Activated CD4-positive, alpha-beta T cell treated with anti-CD3 and anti-CD28 coated beads, Interleukin-2, amount 10 ng/mL, durations not matched to agents 24 days and 14 days (primary cell): ENCODE measurements at regions of chr1 and their contacts with region 1.

Region 1: DNA sequence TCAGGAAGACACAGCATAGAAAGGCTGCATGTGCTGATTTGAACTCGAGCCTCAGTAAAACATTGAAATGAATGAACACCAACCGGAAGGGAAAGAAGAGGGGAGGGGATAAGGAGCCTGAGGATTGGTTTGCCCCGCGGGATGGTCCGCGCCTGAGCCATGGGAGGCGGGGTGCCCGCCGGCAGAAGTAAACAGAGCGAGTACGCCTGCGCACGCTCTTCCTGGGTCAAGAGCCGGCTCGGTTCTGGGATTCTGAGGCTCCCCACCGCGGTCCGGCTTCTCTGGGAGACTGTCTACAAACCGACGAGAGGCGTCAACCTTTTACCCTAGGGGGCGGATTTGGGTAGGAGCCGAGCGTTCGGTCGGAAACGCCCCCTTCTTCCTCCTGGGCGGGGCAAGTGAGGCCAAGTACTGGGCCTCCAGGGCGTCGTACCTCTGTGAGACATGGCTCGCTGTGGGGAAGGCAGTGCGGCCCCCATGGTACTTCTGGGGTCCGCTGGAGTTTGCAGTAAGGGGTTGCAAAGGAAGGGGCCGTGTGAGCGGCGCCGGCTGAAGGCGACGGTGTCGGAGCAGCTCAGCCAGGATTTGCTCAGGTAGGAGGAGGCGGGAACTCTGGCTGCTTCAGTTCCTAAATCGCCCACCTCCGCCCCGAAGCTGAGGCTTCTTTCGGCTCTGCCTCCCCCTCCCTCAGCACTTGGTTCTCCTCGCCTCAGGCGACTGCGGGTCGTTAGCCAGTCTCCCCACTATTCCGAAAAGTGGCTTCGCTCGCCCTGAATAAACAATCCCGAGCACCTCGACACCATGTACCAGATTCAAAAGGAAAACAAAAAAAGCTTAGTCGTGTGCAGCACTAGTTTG is at the start of gene BTBD8:
- DNase-seq: peak; percentile 96
- H3K4me3 Mint-ChIP-seq: peak within 1 kb of the TSS; percentile 94
- H3K27ac Mint-ChIP-seq: peak within 1 kb of the TSS; percentile 86
- H3K4me1 Mint-ChIP-seq: peaks cover 6% of the 10 kb centered on the region
- H3K27me3 Mint-ChIP-seq: no peaks in the 10 kb centered on the region
- total RNA-seq, gene BTBD8: 1.0 and 1.1 TPM in 2 replicates

Region 2: DNA sequence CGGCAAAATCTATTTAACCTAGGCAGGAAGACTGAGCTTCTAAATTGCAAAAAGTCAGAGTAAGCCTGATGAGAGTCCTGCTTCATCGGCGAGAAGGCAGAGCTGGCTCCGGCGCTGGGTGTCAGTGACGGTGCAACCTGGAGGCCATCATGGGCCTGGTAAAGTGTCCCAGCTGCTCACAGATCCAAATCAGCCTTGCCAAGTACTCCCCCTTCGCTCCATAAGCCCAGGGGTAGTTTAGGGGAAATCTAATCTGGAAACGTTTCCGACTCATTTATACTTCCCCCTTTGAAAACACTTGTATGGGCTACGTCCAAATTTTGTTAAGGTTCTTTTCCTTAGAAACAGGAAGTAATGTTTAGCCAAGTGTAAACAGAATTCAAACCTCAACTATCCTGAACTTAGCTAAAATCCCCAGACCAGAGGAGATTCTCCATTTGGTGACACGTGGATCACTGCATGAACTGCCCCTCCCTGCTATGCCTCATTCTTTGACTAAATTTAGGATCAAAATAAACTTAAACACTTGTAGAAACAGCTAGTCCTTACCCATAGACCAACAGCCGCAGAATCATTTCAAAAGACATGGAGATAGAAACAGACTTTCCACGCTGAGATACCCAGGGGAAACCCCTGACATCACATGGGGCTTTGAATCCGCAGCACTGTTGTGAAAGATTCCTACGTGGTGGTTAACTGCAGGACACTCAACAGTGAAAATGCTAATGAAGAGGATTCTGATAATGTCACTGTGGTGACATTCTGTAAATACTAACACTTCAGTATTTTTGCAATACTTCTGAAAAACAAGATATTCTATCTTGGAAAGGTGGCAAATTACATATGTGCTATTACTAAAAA is 367.1 kb before region 1 on chr1:
- intact Hi-C with region 1: no loop called
- DNase-seq: peak; percentile 85
- H3K4me3 Mint-ChIP-seq: peak overlapping the region; percentile 55
- H3K27ac Mint-ChIP-seq: peak overlapping the region; percentile 88
- H3K4me1 Mint-ChIP-seq: peaks cover 35% of the 10 kb centered on the region
- H3K27me3 Mint-ChIP-seq: no peaks in the 10 kb centered on the region

Region 3: GRCh38 chr1:91900538-91900937 is 179.8 kb before region 1 on chr1:
- intact Hi-C with region 1: no loop called
- DNase-seq: no peak
- H3K4me3 Mint-ChIP-seq: no peak overlapping the region
- H3K27ac Mint-ChIP-seq: no peak overlapping the region
- H3K4me1 Mint-ChIP-seq: peaks cover 9% of the 10 kb centered on the region
- H3K27me3 Mint-ChIP-seq: peaks cover 20% of the 10 kb centered on the region

Region 4: GRCh38 chr1:92123868-92124267 is 43.5 kb after region 1 on chr1:
- intact Hi-C with region 1: loop called (anchors 5 kb)
- DNase-seq: peak; percentile 72
- H3K4me3 Mint-ChIP-seq: peak overlapping the region; percentile 64
- H3K27ac Mint-ChIP-seq: peak overlapping the region; percentile 63
- H3K4me1 Mint-ChIP-seq: peaks cover 7% of the 10 kb centered on the region
- H3K27me3 Mint-ChIP-seq: no peaks in the 10 kb centered on the region

Region 5: GRCh38 chr1:92298573-92299476 is 218.5 kb after region 1 on chr1 and contains the starts of genes GLMN and RPAP2:
- intact Hi-C with region 1: loop called (anchors 10 kb)
- DNase-seq: peak; percentile 94
- H3K4me3 Mint-ChIP-seq: peak within 1 kb of the TSS; percentile 99
- H3K27ac Mint-ChIP-seq: peak within 1 kb of the TSS; percentile 99
- H3K4me1 Mint-ChIP-seq: peaks cover 40% of the 10 kb centered on the region
- H3K27me3 Mint-ChIP-seq: no peaks in the 10 kb centered on the region
- total RNA-seq, gene GLMN: 24.2 and 28.5 TPM in 2 replicates
- total RNA-seq, gene RPAP2: 39.4 and 46.8 TPM in 2 replicates